ENCODE measurements at regions of chr19 and their contacts with region 1.

Region 1: GRCh38 chr19:2016041-2016807 is 710 bp upstream of the BTBD2 start:
- DNase-seq: peak; percentile 69 to 91
- H3K4me3 ChIP-seq: peak overlapping the region; percentile 36 to 95 (median 68)
- H3K27ac ChIP-seq: peak overlapping the region; percentile 41 to 84 (median 68)
- H3K4me1 ChIP-seq: peaks cover 23 to 45% (median 35%) of the 10 kb centered on the region in 4 donors
- H3K27me3 ChIP-seq: no peaks in the 10 kb centered on the region
- CTCF ChIP-seq: no peak
- EP300 ChIP-seq: no peak
- POLR2A ChIP-seq: no peak

Region 2: GRCh38 chr19:1907563-1908363 is 108.5 kb before region 1 on chr19:
- intact Hi-C with region 1: no loop called
- DNase-seq: peak; percentile 69 to 77
- H3K4me3 ChIP-seq: peak overlapping the region in 2 of 4 donors; percentile 14 to 43
- H3K27ac ChIP-seq: peak overlapping the region; percentile 78 to 94 (median 90)
- H3K4me1 ChIP-seq: peaks cover 38 to 76% (median 67%) of the 10 kb centered on the region in 4 donors
- H3K27me3 ChIP-seq: no peaks in the 10 kb centered on the region
- CTCF ChIP-seq: no peak
- EP300 ChIP-seq: no peak
- POLR2A ChIP-seq: no peak

Region 3: GRCh38 chr19:1935484-1936208 is 80.6 kb before region 1 on chr19:
- intact Hi-C with region 1: loop called (anchors 10 kb)
- DNase-seq: peak in 1 of 2 donors; percentile 36
- H3K4me3 ChIP-seq: no peak overlapping the region
- H3K27ac ChIP-seq: no peak overlapping the region
- H3K4me1 ChIP-seq: peaks cover 4 to 19% (median 12%) of the 10 kb centered on the region in 4 donors
- H3K27me3 ChIP-seq: no peaks in the 10 kb centered on the region
- CTCF ChIP-seq: no peak
- EP300 ChIP-seq: no peak
- POLR2A ChIP-seq: no peak

Region 4: GRCh38 chr19:2123682-2124387 is 107.6 kb after region 1 on chr19:
- intact Hi-C with region 1: no loop called
- DNase-seq: no peak
- H3K4me3 ChIP-seq: no peak overlapping the region
- H3K27ac ChIP-seq: no peak overlapping the region
- H3K4me1 ChIP-seq: no peaks in the 10 kb centered on the region
- H3K27me3 ChIP-seq: no peaks in the 10 kb centered on the region
- CTCF ChIP-seq: no peak
- EP300 ChIP-seq: no peak
- POLR2A ChIP-seq: no peak